ENCODE measurements at regions of chr16 and their contacts with region 1.

Region 1: DNA sequence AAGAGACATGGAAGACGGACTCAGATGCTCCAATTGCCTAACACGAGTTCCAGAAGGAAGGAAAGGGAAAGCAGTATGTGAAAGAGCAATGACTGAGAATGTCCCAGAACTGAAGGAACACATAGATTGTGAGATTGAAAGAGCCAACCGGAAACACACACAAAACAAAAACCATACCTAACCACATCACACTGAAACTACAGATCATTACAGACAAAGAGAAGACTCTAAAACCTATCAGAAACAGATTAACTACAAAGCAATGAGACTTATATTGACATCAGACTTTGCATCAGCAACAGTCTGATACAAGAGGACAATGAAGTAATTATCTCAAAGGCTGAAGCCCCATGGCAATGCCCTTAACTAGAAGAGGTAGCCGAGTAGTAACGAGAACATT is 45.6 kb upstream of the CLEC18B start:
- DNase-seq: peak; percentile 62
- H3K4me3 Mint-ChIP-seq: peak overlapping the region; percentile 1
- H3K27ac Mint-ChIP-seq: peak overlapping the region; percentile 27
- H3K4me1 Mint-ChIP-seq: peaks cover 20% of the 10 kb centered on the region
- H3K27me3 Mint-ChIP-seq: no peaks in the 10 kb centered on the region

Region 2: GRCh38 chr16:74501484-74502479 is 34.9 kb after region 1 on chr16:
- intact Hi-C with region 1: loop called (anchors 1 kb)
- DNase-seq: no peak
- H3K4me3 Mint-ChIP-seq: no peak overlapping the region
- H3K27ac Mint-ChIP-seq: peak overlapping the region; percentile 41
- H3K4me1 Mint-ChIP-seq: peaks cover 8% of the 10 kb centered on the region
- H3K27me3 Mint-ChIP-seq: no peaks in the 10 kb centered on the region

Region 3: GRCh38 chr16:74577882-74578366 is 111.1 kb after region 1 on chr16:
- intact Hi-C with region 1: loop called (anchors 1 kb)
- DNase-seq: no peak
- H3K4me3 Mint-ChIP-seq: peak overlapping the region; percentile 8
- H3K27ac Mint-ChIP-seq: peak overlapping the region; percentile 66
- H3K4me1 Mint-ChIP-seq: peaks cover 33% of the 10 kb centered on the region
- H3K27me3 Mint-ChIP-seq: no peaks in the 10 kb centered on the region

Region 4: DNA sequence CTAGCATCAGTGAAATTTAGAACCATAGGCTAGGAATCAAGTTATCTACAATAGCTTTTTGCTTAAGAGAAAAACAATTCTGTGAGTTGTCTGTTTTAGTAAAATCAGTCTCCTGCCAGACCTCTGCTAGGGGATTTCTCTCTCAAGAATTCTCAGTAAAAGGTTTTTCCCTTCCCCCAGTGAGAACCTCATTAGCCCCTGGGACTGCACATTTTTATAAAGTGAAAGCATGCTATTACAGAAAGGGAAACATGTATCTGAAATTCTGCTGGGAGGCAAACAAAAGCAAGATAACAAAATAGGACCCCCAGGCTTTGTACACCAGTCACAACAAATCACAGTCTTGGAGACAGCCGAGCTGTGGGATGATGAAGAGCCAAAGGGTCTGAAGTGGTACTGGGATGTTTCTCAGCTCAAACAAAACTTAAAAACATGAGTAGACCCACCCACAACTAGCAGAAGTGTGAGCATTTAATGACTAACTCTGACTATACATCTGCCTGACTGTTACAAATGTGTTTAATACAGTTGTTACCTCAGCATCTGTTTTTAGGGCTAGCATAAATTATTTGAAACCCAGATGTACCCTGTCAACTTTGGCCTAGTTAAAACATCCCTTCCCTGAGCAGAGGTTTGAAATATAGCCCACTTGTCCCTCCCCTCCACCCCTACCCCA is 160.0 kb after region 1 on chr16:
- intact Hi-C with region 1: loop called (anchors 1 kb)
- DNase-seq: no peak
- H3K4me3 Mint-ChIP-seq: peak overlapping the region; percentile 32
- H3K27ac Mint-ChIP-seq: peak overlapping the region; percentile 91
- H3K4me1 Mint-ChIP-seq: peaks cover 28% of the 10 kb centered on the region
- H3K27me3 Mint-ChIP-seq: no peaks in the 10 kb centered on the region

Measured in activated CD4-positive, alpha-beta T cell treated with anti-CD3 and anti-CD28 coated beads, Interleukin-2, amount 10 ng/mL, durations not matched to agents 24 days and 14 days (primary cell).